ENCODE measurements at regions of chr22 and their contacts with region 1.

Region 1: DNA sequence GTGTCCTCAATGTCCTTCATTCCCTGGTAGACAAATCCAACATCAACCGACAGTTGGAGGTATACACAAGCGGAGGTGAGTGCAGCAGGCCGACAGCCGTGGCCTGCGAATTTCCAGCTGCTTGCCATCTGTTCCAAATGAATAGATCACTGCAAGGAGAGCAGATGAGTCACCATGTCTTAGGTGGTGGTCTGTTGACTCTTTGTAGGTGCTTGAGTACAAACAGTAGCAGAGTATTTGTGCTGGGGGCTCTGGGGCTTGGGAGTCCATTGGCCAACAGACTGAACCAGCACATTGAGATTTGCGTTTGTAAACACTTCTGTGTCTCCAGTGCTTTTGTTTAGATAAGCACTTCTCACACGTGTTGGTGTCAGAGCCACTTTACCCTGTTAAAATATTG is 21.1 kb downstream of the EIF3L start:
- DNase-seq: no peak
- ATAC-seq: no peak
- H3K4me3 ChIP-seq: no peak overlapping the region
- H3K4me3 Mint-ChIP-seq: no peak overlapping the region
- H3K27ac ChIP-seq: no peak overlapping the region
- H3K27ac Mint-ChIP-seq: no peak overlapping the region
- H3K4me1 ChIP-seq: no peaks in the 10 kb centered on the region
- H3K4me1 Mint-ChIP-seq: peaks cover 1% of the 10 kb centered on the region
- H3K27me3 ChIP-seq: no peaks in the 10 kb centered on the region
- H3K27me3 Mint-ChIP-seq: no peaks in the 10 kb centered on the region
- CTCF ChIP-seq: no peak

Region 2: DNA sequence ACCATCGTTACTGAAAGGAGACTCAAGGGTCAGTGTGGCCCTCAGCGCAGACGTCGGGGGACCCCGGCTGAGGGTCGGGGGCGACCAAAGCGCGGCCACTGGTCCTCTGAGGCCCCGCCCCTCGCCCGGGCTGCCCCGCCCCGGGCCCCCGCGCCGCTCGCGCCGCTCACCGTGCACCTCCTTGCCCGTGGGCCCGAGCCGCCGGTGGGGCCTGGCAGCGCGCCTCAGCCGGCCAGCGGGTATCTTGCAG is 26.6 kb before region 1 on chr22:
- CTCF ChIA-PET with region 1: no interaction called
- POLR2A ChIA-PET with region 1: interaction called, 7 read pairs
- intact Hi-C with region 1: loop called in 1 of 2 experiments (anchors 1 kb)
- DNase-seq: peak in 1 of 9 experiments; percentile 49
- ATAC-seq: peak; percentile 25
- H3K4me3 ChIP-seq: peak overlapping the region; percentile 48 to 74
- H3K4me3 Mint-ChIP-seq: peak overlapping the region; percentile 87
- H3K27ac ChIP-seq: peak overlapping the region; percentile 60 to 77
- H3K27ac Mint-ChIP-seq: peak overlapping the region; percentile 86
- H3K4me1 ChIP-seq: peaks cover 17% of the 10 kb centered on the region
- H3K4me1 Mint-ChIP-seq: peaks cover 21% of the 10 kb centered on the region
- H3K27me3 ChIP-seq: no peaks in the 10 kb centered on the region
- H3K27me3 Mint-ChIP-seq: no peaks in the 10 kb centered on the region
- CTCF ChIP-seq: no peak

Measured in CD8-positive, alpha-beta T cell (primary cell).